Activated B cell treated with CpG ODN at 0.5 μM for 24 hours (primary cell): ENCODE measurements at regions of chr3 and their contacts with region 1.

Region 1: GRCh38 chr3:10758304-10759061 is 57.5 kb upstream of the SLC6A11 start:
- DNase-seq: no peak
- ATAC-seq: peak; percentile 73
- H3K4me3 Mint-ChIP-seq: no peak overlapping the region
- H3K27ac Mint-ChIP-seq: no peak overlapping the region
- H3K4me1 Mint-ChIP-seq: no peaks in the 10 kb centered on the region
- H3K27me3 Mint-ChIP-seq: peaks cover 39% of the 10 kb centered on the region
- CTCF ChIP-seq: no peak

Region 2: GRCh38 chr3:10666621-10667020 is 91.9 kb before region 1 on chr3:
- CTCF ChIA-PET with region 1: no interaction called
- POLR2A ChIA-PET with region 1: no interaction called
- intact Hi-C with region 1: no loop called
- DNase-seq: no peak
- ATAC-seq: no peak
- H3K4me3 Mint-ChIP-seq: no peak overlapping the region
- H3K27ac Mint-ChIP-seq: no peak overlapping the region
- H3K4me1 Mint-ChIP-seq: no peaks in the 10 kb centered on the region
- H3K27me3 Mint-ChIP-seq: peaks cover 34% of the 10 kb centered on the region
- CTCF ChIP-seq: no peak

Region 3: GRCh38 chr3:10768708-10769394 is 10.4 kb after region 1 on chr3:
- CTCF ChIA-PET with region 1: interaction called, 13 read pairs
- POLR2A ChIA-PET with region 1: no interaction called
- intact Hi-C with region 1: no loop called
- DNase-seq: no peak
- ATAC-seq: no peak
- H3K4me3 Mint-ChIP-seq: no peak overlapping the region
- H3K27ac Mint-ChIP-seq: no peak overlapping the region
- H3K4me1 Mint-ChIP-seq: no peaks in the 10 kb centered on the region
- H3K27me3 Mint-ChIP-seq: peaks cover 34% of the 10 kb centered on the region
- CTCF ChIP-seq: no peak

Region 4: GRCh38 chr3:10945683-10946287 is 187.3 kb after region 1 on chr3:
- CTCF ChIA-PET with region 1: interaction called, 3 read pairs
- POLR2A ChIA-PET with region 1: no interaction called
- intact Hi-C with region 1: loop called (anchors 5 kb)
- DNase-seq: peak; percentile 37
- ATAC-seq: no peak
- H3K4me3 Mint-ChIP-seq: no peak overlapping the region
- H3K27ac Mint-ChIP-seq: no peak overlapping the region
- H3K4me1 Mint-ChIP-seq: no peaks in the 10 kb centered on the region
- H3K27me3 Mint-ChIP-seq: peaks cover 13% of the 10 kb centered on the region
- CTCF ChIP-seq: no peak

Region 5: DNA sequence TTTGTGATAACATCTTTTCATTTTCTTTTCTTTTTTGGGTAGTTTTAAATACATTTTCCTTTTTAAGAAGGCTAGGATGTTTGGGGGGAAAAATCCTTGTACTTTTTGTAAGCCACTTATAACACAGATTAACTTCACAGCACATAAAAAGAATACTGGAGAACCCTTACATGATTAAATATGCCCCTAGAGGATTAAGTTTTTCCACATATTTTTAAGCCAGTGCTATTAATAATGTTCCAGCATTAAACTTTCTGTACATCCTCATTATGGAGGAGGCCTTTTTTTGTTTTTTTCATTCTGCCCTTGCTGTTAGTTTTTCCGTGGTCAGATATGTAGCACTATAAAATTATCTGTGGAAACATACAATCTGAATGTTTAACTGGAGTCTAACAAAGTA is 661.6 kb after region 1 on chr3:
- CTCF ChIA-PET with region 1: no interaction called
- POLR2A ChIA-PET with region 1: no interaction called
- intact Hi-C with region 1: no loop called
- DNase-seq: no peak
- ATAC-seq: no peak
- H3K4me3 Mint-ChIP-seq: no peak overlapping the region
- H3K27ac Mint-ChIP-seq: no peak overlapping the region
- H3K4me1 Mint-ChIP-seq: no peaks in the 10 kb centered on the region
- H3K27me3 Mint-ChIP-seq: no peaks in the 10 kb centered on the region
- CTCF ChIP-seq: no peak

Region 6: DNA sequence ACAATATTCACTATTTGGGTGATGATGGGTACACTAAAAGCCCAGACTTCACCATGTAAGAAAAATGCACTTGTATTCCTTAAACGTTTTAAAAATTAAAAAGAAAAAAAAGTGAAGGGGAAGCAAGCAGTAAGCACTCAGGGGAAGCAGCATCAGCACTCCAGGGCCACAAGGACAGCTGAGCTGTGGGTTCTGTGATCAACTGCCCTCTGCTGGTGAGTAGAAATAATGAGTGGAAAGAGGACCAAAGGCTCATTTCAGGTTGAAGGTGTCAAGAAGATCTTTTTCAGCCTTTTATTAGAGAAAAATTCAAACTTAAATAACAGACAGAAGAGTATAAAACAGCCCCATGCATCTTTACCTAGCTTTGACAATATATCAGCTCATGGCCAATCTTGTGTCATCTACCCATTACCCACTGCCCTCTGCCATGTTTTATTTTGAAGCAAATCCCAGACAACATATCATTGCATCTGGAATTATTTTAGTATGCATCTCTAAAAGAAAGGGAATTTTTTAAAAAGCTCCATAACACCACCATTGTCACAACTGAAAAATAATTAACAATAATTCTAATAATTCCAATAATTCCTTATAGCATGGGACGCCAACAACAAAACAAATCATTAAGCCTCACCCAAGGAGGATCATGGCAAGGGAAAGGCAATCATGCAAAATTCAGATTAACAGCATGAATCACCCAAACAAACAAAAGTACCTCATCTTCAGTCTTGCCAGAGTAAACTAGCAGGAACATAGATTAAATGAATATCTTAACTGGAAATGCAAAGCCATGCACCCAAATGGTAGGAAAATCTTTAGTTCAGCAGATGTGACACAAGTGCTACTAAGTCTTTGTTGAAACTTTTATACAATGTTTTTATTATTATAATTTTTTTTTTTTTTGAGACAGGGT is 1045.8 kb after region 1 on chr3:
- CTCF ChIA-PET with region 1: no interaction called
- POLR2A ChIA-PET with region 1: no interaction called
- intact Hi-C with region 1: loop called (anchors 2 kb)
- DNase-seq: no peak
- ATAC-seq: peak; percentile 71
- H3K4me3 Mint-ChIP-seq: no peak overlapping the region
- H3K27ac Mint-ChIP-seq: no peak overlapping the region
- H3K4me1 Mint-ChIP-seq: no peaks in the 10 kb centered on the region
- H3K27me3 Mint-ChIP-seq: no peaks in the 10 kb centered on the region
- CTCF ChIP-seq: no peak

Region 7: DNA sequence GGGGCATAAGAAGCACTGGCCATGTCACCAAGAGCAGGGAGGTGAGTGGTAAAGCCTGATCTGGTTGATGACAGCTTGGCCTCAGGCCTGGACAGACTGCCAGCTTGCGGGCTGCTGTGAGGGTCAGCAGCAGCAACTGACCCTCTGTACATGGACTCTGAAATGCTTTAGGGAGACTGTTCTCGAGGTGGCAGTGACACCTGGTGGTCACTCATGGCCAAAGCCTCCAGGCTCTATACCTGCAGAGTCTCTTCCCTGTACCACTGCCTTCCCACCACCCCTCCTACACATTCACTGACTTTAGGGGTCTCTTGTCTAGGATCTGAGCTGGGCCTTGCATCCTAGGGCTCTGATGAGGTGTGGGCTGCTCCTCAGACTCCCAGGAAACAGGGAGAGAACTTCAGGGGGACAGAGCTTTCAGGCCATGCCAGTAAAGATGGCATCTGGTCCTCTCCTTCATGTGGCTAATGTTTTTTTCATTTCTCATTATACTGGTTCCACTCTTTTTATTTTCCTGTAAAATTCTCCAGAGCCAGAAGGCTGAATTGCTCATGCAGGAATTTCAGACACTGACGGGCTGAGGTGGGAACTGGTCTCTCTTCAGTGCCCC is 1417.5 kb after region 1 on chr3:
- CTCF ChIA-PET with region 1: no interaction called
- POLR2A ChIA-PET with region 1: no interaction called
- intact Hi-C with region 1: loop called (anchors 10 kb)
- DNase-seq: no peak
- ATAC-seq: no peak
- H3K4me3 Mint-ChIP-seq: no peak overlapping the region
- H3K27ac Mint-ChIP-seq: no peak overlapping the region
- H3K4me1 Mint-ChIP-seq: no peaks in the 10 kb centered on the region
- H3K27me3 Mint-ChIP-seq: no peaks in the 10 kb centered on the region
- CTCF ChIP-seq: no peak